MCF 10A (cell line): ENCODE measurements at regions of chr10 and their contacts with region 1.

Region 1: DNA sequence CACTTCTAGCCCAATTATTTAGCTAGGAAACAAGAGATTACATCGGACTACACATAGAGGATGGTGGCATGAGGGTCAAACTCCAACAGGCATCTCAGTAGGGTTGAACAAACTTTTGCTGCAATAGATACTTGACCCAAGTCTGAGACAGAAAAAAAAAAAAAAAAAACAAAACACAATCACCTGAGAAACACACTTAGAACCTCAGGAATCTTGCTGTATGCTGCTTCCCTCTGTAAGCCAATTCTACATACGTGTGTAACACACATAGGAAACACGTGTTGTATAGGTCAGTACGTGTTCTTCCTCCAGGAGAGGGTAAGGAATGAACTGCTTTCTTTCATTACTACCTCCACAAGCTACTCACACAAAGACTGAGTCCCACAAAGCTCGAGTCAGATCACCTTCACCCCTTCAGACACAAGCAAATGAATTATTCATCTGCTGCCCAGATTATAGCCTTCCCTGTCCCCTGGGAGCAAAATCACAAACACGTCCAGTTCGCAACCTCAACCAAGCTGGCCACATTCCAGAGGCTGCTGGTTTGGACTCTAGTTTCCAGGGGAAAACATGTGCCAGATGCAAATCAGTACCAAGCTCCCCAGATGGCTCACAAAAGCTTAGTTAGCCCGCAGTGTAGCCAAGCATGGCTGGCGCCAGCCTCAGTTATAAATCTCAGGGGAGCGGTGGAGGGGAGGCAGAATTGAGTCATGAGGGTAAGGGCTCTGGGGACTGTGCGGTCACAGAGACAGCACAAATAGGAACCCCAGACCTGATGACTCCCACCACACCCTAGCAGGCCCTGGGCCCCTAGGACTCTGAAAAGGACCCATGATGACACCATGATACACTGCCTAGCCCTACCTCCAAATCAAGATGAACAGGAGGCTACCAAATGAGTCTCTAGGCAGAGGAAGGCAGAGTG is 15.1 kb downstream of the PSAP start:
- DNase-seq: peak; percentile 69
- H3K4me3 Mint-ChIP-seq: no peak overlapping the region
- H3K27ac Mint-ChIP-seq: peak overlapping the region; percentile 84
- H3K4me1 Mint-ChIP-seq: peaks cover 58% of the 10 kb centered on the region
- H3K27me3 Mint-ChIP-seq: no peaks in the 10 kb centered on the region
- CTCF ChIP-seq: no peak

Region 2: GRCh38 chr10:71850637-71851464 is 14.9 kb after region 1 on chr10 and contains the start of gene PSAP:
- CTCF ChIA-PET with region 1: interaction called, 5 read pairs
- POLR2A ChIA-PET with region 1: interaction called, 53 read pairs
- intact Hi-C with region 1: no loop called
- DNase-seq: peak; percentile 99
- H3K4me3 Mint-ChIP-seq: peak within 1 kb of the TSS; percentile 80
- H3K27ac Mint-ChIP-seq: peak within 1 kb of the TSS; percentile 94
- H3K4me1 Mint-ChIP-seq: peaks cover 42% of the 10 kb centered on the region
- H3K27me3 Mint-ChIP-seq: no peaks in the 10 kb centered on the region
- CTCF ChIP-seq: no peak
- total RNA-seq, gene PSAP: 506 and 692 TPM in 2 replicates